ENCODE measurements at regions of chr6 and their contacts with region 1.

Region 1: GRCh38 chr6:30013291-30013922 is 47.7 kb upstream of the POLR1H start:
- H3K4me3 ChIP-seq: no peak overlapping the region
- H3K27ac ChIP-seq: no peak overlapping the region
- H3K4me1 ChIP-seq: no peaks in the 10 kb centered on the region
- CTCF ChIP-seq: peak; percentile 67; the same call in 1 of the 2 replicates

Region 2: DNA sequence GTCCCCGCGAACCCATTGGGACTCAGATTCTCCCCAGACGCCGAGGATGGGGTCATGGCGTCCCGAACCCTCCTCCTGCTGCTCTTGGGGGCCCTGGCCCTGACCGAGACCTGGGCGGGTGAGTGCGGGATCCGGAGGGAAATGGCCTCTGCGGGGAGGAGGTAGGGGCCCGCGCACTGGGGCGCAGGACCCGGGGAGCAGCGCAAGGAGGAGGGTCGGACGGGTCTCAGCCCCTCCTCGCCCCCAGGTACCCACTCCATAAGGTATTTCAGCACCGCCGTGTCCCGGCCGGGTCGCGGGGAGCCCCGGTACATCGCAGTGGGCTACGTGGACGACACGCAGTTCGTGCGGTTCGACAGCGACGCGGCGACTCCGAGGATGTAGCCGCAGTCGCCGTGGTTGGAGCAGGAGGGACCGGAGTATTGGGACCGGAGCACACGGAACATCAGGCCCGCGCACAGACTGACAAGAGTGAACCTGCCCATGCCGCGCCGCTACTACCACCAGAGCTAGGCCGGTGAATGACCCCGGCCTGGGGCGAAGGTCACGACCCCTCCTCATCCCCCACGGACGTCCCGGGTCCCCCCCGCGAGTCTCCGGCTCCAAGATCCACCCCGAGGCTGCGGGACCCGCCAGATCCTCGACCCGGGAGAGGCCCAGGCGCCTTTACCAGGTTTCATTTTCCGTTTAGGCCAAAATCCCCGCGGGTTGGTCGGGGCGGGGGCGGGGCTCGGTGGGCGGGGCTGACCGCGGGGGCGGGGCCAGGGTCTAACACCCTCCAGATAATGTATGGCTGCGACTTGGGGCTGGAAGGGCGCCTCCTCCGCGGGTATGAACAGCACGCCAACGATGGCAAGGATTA is 86.8 kb before region 1 on chr6:
- CTCF ChIA-PET with region 1: no interaction called
- POLR2A ChIA-PET with region 1: no interaction called
- H3K4me3 ChIP-seq: peak overlapping the region; percentile 10; the same call in 1 of the 2 replicates
- H3K27ac ChIP-seq: no peak overlapping the region
- H3K4me1 ChIP-seq: no peaks in the 10 kb centered on the region
- CTCF ChIP-seq: no peak

Region 3: GRCh38 chr6:30025186-30025585 is 11.8 kb after region 1 on chr6:
- CTCF ChIA-PET with region 1: interaction called, 15 read pairs
- POLR2A ChIA-PET with region 1: no interaction called
- H3K4me3 ChIP-seq: no peak overlapping the region
- H3K27ac ChIP-seq: no peak overlapping the region
- H3K4me1 ChIP-seq: no peaks in the 10 kb centered on the region
- CTCF ChIP-seq: no peak

Region 4: GRCh38 chr6:30031381-30031780 is 18.0 kb after region 1 on chr6:
- CTCF ChIA-PET with region 1: interaction called, 10 read pairs
- POLR2A ChIA-PET with region 1: no interaction called
- H3K4me3 ChIP-seq: no peak overlapping the region
- H3K27ac ChIP-seq: no peak overlapping the region
- H3K4me1 ChIP-seq: no peaks in the 10 kb centered on the region
- CTCF ChIP-seq: no peak